Naive thymus-derived CD4-positive, alpha-beta T cell (primary cell): ENCODE measurements at regions of chr20 and their contacts with region 1.

Region 1: DNA sequence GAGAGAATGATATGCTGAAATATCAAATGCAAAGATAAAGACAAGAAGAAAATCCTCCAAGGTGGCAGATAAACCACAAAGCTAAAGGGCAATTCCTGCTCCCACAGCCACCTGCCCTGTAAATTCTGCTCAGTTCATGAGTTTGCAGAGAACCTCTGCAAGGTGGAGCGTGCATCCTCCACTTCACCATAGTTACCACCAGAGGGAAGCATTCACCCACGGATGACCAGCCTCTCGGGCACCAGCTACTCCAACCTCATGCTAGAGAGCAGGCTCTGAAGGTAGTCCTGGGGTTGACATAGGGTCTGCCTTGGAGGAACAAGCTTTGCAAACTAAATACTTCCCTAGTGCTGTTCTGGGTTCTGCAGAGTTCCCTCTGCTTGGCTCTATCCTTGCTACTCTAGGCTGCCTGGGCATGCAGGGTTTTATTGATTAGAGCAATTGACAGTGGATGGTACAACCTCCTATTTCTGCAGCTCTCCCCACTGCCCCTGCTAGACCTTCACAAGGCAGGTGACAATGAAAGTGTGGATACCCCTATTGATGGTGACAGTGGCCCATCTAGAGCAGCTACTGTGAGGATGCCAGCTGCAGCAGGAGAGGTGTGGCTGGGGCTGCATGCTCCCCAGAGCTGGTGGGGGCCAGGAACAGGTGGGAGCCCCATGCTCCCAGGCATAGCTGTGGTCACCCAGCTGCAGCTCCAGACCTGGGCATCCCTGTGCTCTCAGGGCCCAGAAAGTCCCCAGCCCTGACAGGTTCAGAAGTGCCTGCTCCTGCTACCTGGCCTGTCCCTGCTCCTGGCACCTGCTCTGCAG is 51.1 kb downstream of the GGTLC1 start:
- DNase-seq: peak; percentile 43 to 80 (median 70)
- ATAC-seq: peak; percentile 97
- H3K4me3 ChIP-seq: no peak overlapping the region
- H3K4me3 Mint-ChIP-seq: no peak overlapping the region
- H3K27ac ChIP-seq: no peak overlapping the region
- H3K27ac Mint-ChIP-seq: peak overlapping the region in 2 of 9 donors; percentile 25 to 79
- H3K4me1 ChIP-seq: no peaks in the 10 kb centered on the region
- H3K4me1 Mint-ChIP-seq: no peaks in the 10 kb centered on the region
- H3K27me3 ChIP-seq: no peaks in the 10 kb centered on the region
- H3K27me3 Mint-ChIP-seq: peaks cover 0 to 7% (median 0%) of the 10 kb centered on the region in 5 donors

Region 2: DNA sequence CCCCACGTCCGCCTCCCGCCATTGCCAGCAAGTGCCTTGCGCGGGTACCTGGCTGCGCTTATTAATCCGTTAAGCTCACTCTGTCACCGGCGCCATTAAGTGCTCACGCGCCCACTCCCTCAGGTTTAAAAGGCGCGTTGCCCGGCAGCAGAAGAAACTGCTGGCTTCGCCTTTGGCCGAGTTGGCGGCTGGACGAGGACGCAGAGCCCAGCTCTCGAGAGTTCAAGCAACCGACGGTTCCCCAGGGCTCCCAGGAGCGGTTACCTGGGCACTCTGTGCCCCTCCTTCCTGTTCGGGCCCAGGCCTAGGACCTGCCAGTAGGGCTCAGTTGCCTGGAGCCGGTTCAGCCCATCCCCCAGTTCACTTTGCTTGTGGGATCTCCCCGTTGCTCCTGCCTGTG is 51.1 kb after region 1 on chr20 and contains the start of gene GGTLC1:
- CTCF ChIA-PET with region 1: no interaction called
- POLR2A ChIA-PET with region 1: no interaction called
- intact Hi-C with region 1: loop called in 1 of 2 experiments (anchors 2 kb)
- DNase-seq: no peak
- ATAC-seq: no peak
- H3K4me3 ChIP-seq: no peak within 1 kb of the TSS
- H3K4me3 Mint-ChIP-seq: no peak within 1 kb of the TSS
- H3K27ac ChIP-seq: no peak within 1 kb of the TSS
- H3K27ac Mint-ChIP-seq: no peak within 1 kb of the TSS
- H3K4me1 ChIP-seq: no peaks in the 10 kb centered on the region
- H3K4me1 Mint-ChIP-seq: no peaks in the 10 kb centered on the region
- H3K27me3 ChIP-seq: no peaks in the 10 kb centered on the region
- H3K27me3 Mint-ChIP-seq: no peaks in the 10 kb centered on the region
- total RNA-seq, gene GGTLC1: not detected

Region 3: DNA sequence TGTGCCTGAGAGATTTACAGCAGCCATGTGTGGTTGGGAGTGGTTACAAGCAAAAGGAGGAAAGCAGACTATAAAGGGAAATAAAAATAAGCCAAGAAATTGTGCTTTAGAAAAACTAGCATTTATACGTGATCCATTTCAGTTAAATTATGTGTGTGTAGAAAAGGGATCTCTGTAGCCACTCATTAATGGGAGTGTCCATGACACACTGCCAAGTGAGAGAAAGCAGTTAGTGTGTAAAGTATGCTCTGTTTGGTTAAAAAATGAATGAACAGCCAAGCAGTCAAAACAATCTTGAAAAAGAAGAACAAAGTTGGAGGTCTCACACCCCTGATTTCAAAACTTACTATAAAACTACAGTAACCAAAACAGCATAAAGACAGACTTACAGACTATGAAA is 119.0 kb after region 1 on chr20:
- CTCF ChIA-PET with region 1: no interaction called
- POLR2A ChIA-PET with region 1: no interaction called
- intact Hi-C with region 1: no loop called
- DNase-seq: no peak
- ATAC-seq: no peak
- H3K4me3 ChIP-seq: no peak overlapping the region
- H3K4me3 Mint-ChIP-seq: no peak overlapping the region
- H3K27ac ChIP-seq: no peak overlapping the region
- H3K27ac Mint-ChIP-seq: no peak overlapping the region
- H3K4me1 ChIP-seq: peaks cover 0 to 9% of the 10 kb centered on the region in 2 donors
- H3K4me1 Mint-ChIP-seq: peaks cover 2 to 12% (median 7%) of the 10 kb centered on the region in 7 donors
- H3K27me3 ChIP-seq: no peaks in the 10 kb centered on the region
- H3K27me3 Mint-ChIP-seq: no peaks in the 10 kb centered on the region

Region 4: DNA sequence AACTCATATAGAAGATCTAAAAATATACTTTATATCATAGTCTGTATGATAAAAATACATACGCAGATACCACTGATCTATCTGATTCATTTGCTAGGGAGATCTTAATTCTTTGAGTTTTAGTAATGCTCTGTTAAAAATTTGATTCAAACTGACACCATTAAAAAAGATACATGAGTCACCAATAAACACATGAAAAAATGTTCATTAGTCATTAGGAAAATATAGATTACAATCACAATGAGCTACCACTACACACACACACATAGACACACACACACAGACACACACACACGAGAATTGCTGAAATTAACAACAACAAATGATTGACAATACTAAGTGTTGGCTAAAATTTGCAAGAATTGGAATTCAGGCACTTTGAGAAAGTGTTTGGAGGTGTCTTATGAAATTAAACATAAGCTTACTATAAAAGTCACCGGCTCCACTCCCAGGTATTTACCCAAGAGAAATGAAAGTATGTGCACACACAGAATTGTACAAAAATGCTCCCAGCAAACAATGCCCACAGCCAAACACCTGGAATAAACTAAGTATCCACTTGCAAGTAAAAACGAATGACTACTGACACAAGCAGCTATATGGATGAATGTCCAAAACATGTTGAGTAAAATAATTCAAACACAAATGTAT is 168.8 kb after region 1 on chr20:
- CTCF ChIA-PET with region 1: interaction called, 21 read pairs
- POLR2A ChIA-PET with region 1: no interaction called
- intact Hi-C with region 1: no loop called
- DNase-seq: no peak
- ATAC-seq: no peak
- H3K4me3 ChIP-seq: no peak overlapping the region
- H3K4me3 Mint-ChIP-seq: no peak overlapping the region
- H3K27ac ChIP-seq: no peak overlapping the region
- H3K27ac Mint-ChIP-seq: no peak overlapping the region
- H3K4me1 ChIP-seq: peaks cover 0 to 6% of the 10 kb centered on the region in 2 donors
- H3K4me1 Mint-ChIP-seq: peaks cover 0 to 10% (median 0%) of the 10 kb centered on the region in 7 donors
- H3K27me3 ChIP-seq: no peaks in the 10 kb centered on the region
- H3K27me3 Mint-ChIP-seq: peaks cover 0 to 8% (median 5%) of the 10 kb centered on the region in 5 donors

Region 5: GRCh38 chr20:24781422-24781980 is 844.0 kb after region 1 on chr20:
- CTCF ChIA-PET with region 1: no interaction called
- POLR2A ChIA-PET with region 1: no interaction called
- intact Hi-C with region 1: loop called in 1 of 2 experiments (anchors 2 kb)
- DNase-seq: peak in 2 of 9 donors; percentile 11 to 16
- ATAC-seq: no peak
- H3K4me3 ChIP-seq: no peak overlapping the region
- H3K4me3 Mint-ChIP-seq: no peak overlapping the region
- H3K27ac ChIP-seq: no peak overlapping the region
- H3K27ac Mint-ChIP-seq: no peak overlapping the region
- H3K4me1 ChIP-seq: no peaks in the 10 kb centered on the region
- H3K4me1 Mint-ChIP-seq: peaks cover 0 to 17% (median 5%) of the 10 kb centered on the region in 7 donors
- H3K27me3 ChIP-seq: no peaks in the 10 kb centered on the region
- H3K27me3 Mint-ChIP-seq: peaks cover 15 to 25% (median 23%) of the 10 kb centered on the region in 5 donors